Panc1 (cell line): ENCODE measurements at regions of chr17 and their contacts with region 1.

Region 1: DNA sequence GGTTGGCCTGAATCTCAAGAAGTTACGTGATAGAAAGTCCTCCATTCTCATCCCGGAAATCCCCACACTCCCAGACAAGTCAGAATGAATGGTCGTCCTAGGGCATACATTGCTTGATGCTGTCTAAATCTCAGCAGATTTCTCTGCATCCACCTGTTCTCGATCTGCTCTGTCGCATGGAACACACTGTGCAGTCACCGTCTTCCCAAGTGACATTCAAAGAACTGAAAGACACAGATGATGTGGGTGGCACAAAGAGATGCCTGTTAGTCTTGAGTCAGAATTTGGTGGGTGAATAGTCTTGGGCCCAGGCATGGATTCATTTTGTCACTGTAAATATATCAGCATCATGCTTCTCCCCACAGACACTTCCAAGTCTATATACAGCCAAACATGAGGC is 518 bp upstream of the KRTAP9-3 start:
- DNase-seq: no peak
- ATAC-seq: no peak
- H3K4me3 ChIP-seq: no peak overlapping the region
- H3K27ac ChIP-seq: no peak overlapping the region
- H3K4me1 ChIP-seq: no peaks in the 10 kb centered on the region
- H3K27me3 ChIP-seq: peaks cover 42% of the 10 kb centered on the region
- CTCF ChIP-seq: no peak

Region 2: DNA sequence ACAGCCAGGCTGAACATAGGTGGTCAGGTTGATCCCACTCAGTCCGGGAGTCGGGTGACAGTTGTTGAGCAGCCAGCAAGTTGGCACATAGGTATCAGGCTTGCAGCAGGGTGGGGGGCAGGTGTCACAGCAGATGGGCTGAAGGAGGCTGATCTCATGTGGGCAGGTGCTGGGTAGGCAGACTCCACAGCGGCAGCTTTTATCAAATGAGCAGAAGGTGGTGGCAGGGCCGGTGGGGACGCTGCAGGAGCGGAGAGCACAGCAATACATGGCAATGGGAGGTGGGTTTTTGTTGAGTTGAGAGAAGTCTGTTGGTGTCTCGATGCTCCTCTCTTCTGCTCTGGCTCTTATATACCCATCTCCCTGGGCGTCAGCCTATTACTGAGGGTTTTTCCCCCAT is 222.9 kb before region 1 on chr17 and contains the start of gene KRTAP3-1:
- CTCF ChIA-PET with region 1: no interaction called
- POLR2A ChIA-PET with region 1: interaction called, 15 read pairs
- in situ Hi-C with region 1: no loop called
- intact Hi-C with region 1: no loop called
- DNase-seq: no peak
- ATAC-seq: no peak
- H3K4me3 ChIP-seq: no peak within 1 kb of the TSS
- H3K27ac ChIP-seq: no peak within 1 kb of the TSS
- H3K4me1 ChIP-seq: no peaks in the 10 kb centered on the region
- H3K27me3 ChIP-seq: no peaks in the 10 kb centered on the region; the same call in 1 of the 2 replicates
- CTCF ChIP-seq: no peak
- total RNA-seq, gene KRTAP3-1: not detected

Region 3: GRCh38 chr17:41264599-41264998 is 32.9 kb after region 1 on chr17:
- CTCF ChIA-PET with region 1: no interaction called
- POLR2A ChIA-PET with region 1: no interaction called
- in situ Hi-C with region 1: no loop called
- intact Hi-C with region 1: no loop called
- DNase-seq: no peak
- ATAC-seq: no peak
- H3K4me3 ChIP-seq: no peak overlapping the region
- H3K27ac ChIP-seq: no peak overlapping the region
- H3K4me1 ChIP-seq: no peaks in the 10 kb centered on the region
- H3K27me3 ChIP-seq: peaks cover 15% of the 10 kb centered on the region
- CTCF ChIP-seq: no peak

Region 4: DNA sequence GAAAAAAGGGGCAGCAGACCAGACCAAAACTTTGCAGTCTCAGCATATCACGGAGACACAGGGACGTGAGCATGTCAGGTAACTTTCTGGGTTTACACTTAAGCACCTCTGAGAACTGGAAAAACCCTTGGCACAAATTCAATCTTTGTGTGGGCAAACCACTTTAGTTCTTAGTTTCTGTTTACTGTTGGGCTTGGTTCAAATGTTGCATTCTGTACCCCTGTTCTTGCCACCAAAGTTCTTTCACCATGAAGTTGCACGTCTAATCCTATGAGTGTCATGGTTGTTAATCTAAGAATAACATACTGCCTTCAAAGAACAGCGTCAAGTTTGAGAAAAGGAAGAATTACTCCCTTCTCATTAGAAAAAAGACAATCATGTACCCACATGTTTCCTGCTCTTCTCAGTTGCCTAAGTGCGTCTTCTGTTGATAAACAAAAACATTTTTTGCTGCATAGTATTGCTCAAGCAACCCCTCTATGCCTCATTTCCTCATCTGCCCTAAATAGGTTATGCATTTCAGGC is 107.3 kb after region 1 on chr17:
- CTCF ChIA-PET with region 1: no interaction called
- POLR2A ChIA-PET with region 1: no interaction called
- in situ Hi-C with region 1: no loop called
- intact Hi-C with region 1: no loop called
- DNase-seq: no peak
- ATAC-seq: no peak
- H3K4me3 ChIP-seq: no peak overlapping the region
- H3K27ac ChIP-seq: no peak overlapping the region
- H3K4me1 ChIP-seq: no peaks in the 10 kb centered on the region
- H3K27me3 ChIP-seq: no peaks in the 10 kb centered on the region
- CTCF ChIP-seq: no peak